Naive thymus-derived CD4-positive, alpha-beta T cell (primary cell): ENCODE measurements at regions of chrX and their contacts with region 1.

Region 1: DNA sequence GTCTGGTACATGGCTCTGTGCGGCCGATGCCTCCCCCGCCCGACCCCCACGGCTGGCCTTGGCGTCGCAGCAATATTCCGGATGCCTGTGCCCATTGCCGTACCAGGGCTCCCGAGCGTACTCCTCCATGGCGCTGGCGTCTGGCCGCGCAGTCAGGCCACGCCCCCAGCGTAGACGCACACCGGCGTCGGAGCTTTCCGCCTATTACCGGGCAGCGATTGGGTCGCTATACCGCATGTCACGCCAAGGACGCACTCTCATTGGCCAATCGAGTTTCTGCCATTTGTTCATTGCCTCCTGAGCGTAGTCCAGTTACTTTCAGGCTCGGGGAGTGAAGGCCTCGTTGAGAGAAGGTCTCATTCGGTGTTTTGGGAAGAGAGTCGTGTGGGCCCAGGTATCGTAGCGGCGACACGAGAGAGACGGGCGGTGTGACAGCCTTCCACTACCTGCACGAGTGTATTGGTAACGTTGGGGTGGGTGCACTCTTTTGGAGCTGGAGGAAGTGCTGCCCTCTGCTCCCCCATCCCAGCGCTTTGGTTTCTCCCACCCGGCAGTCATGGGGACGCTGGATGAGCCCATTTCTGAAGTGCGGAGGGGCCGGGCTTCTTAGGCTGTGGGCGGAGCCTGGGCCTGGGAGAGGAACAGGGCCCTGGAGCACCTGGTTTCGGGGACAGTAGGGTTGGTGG is at the starts of genes PQBP1 and TIMM17B:
- DNase-seq: peak; percentile 71 to 93 (median 89)
- ATAC-seq: peak; percentile 92
- H3K4me3 ChIP-seq: peak within 1 kb of the TSS; percentile 91
- H3K4me3 Mint-ChIP-seq: peak within 1 kb of the TSS; percentile 83 to 100 (median 91)
- H3K27ac ChIP-seq: peak within 1 kb of the TSS; percentile 98
- H3K27ac Mint-ChIP-seq: peak within 1 kb of the TSS; percentile 89 to 98 (median 94)
- H3K4me1 ChIP-seq: peaks cover 12 to 16% of the 10 kb centered on the region in 2 donors
- H3K4me1 Mint-ChIP-seq: peaks cover 6 to 42% (median 24%) of the 10 kb centered on the region in 7 donors
- H3K27me3 ChIP-seq: no peaks in the 10 kb centered on the region
- H3K27me3 Mint-ChIP-seq: no peaks in the 10 kb centered on the region
- total RNA-seq, gene PQBP1: 64.1 to 89.5 (median 74.6) TPM
- total RNA-seq, gene TIMM17B: 41.1 to 46.6 (median 44.2) TPM

Region 2: DNA sequence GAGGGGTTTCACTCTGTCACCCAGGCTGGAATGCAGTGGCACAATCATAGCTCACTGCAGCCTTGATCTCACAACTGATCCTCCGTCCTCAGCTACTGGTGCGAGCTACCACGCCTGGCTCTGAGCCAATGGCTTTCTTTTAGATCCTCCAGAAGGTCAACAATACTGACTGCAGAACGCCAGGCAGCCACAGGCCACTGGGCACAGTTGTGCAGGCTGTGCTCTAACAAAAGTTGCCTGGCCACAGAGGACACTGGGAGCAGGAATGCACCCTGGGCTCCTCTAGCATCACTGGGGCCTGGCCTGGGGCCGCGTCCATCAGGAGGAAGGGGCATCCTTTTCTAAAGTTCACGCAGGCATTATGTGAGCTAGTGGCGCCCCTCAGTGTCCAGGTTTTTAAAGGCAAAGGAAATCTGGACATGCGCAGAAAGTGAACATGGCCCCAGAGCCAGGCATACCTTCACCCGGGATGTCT is 403.8 kb before region 1 on chrX:
- CTCF ChIA-PET with region 1: no interaction called
- POLR2A ChIA-PET with region 1: no interaction called
- intact Hi-C with region 1: no loop called
- DNase-seq: no peak
- ATAC-seq: no peak
- H3K4me3 ChIP-seq: no peak overlapping the region
- H3K4me3 Mint-ChIP-seq: no peak overlapping the region
- H3K27ac ChIP-seq: no peak overlapping the region
- H3K27ac Mint-ChIP-seq: no peak overlapping the region
- H3K4me1 ChIP-seq: no peaks in the 10 kb centered on the region
- H3K4me1 Mint-ChIP-seq: peaks cover 0 to 6% (median 0%) of the 10 kb centered on the region in 7 donors
- H3K27me3 ChIP-seq: no peaks in the 10 kb centered on the region
- H3K27me3 Mint-ChIP-seq: no peaks in the 10 kb centered on the region

Region 3: DNA sequence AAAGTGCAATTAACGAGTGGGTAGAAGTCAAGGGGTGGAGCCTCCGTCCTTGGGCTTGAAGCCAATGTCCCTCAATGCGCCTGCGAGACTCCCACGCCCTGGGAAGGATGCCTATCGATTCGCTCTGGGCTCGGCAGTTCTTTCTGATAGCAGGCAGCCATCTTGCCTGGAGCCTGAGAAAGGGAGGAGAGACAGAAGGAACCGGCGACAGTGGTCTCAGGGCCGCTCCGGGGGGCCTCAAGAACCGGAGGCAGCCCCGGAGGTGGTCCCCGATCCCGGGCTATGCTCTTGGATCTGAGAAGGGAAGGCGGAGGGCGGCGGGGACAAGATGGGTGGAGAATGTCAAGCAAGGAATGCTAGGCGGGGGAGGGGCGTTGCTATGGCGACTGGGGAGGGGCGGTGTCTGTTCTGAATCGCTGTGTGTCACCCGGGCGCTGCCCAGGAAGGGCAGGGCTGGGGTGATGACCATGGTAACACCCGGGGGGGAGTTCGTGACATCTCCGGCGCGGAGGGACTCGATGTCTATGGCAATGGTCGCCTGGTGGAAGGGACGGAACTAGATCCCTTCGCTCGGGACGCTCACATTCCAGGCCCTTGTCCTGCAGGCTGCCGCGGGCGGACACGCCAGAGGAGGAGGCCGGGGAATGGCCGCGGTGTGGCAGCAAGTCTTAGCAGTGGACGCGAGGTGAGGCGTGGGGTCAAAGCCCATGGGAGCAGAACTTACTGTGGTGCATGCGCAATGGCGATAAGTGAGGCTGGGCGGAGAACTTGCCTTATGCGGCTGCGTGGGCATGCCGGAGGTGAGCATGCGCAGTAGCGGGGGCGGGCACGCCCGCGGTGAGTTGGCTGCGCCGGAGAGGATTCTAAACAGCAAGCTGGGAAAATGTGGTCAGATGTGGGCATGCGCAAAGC is 300.2 kb before region 1 on chrX and contains the start of gene WDR13:
- CTCF ChIA-PET with region 1: no interaction called
- POLR2A ChIA-PET with region 1: no interaction called
- intact Hi-C with region 1: loop called in 1 of 2 experiments (anchors 1 kb)
- DNase-seq: peak; percentile 77 to 93 (median 91)
- ATAC-seq: peak; percentile 93
- H3K4me3 ChIP-seq: peak within 1 kb of the TSS; percentile 98
- H3K4me3 Mint-ChIP-seq: peak within 1 kb of the TSS; percentile 81 to 99 (median 96)
- H3K27ac ChIP-seq: peak within 1 kb of the TSS; percentile 94
- H3K27ac Mint-ChIP-seq: peak within 1 kb of the TSS; percentile 98 to 100 (median 99)
- H3K4me1 ChIP-seq: peaks cover 0 to 8% of the 10 kb centered on the region in 2 donors
- H3K4me1 Mint-ChIP-seq: peaks cover 4 to 16% (median 11%) of the 10 kb centered on the region in 7 donors
- H3K27me3 ChIP-seq: no peaks in the 10 kb centered on the region
- H3K27me3 Mint-ChIP-seq: peaks cover 0 to 2% (median 0%) of the 10 kb centered on the region in 5 donors
- total RNA-seq, gene WDR13: 44.8 to 66.9 (median 54.4) TPM

Region 4: GRCh38 chrX:48696301-48697181 is 201.2 kb before region 1 on chrX and contains the start of gene SUV39H1:
- CTCF ChIA-PET with region 1: no interaction called
- POLR2A ChIA-PET with region 1: no interaction called
- intact Hi-C with region 1: loop called in 1 of 2 experiments (anchors 5 kb)
- DNase-seq: peak; percentile 76 to 90 (median 85)
- ATAC-seq: peak; percentile 97
- H3K4me3 ChIP-seq: peak within 1 kb of the TSS; percentile 62
- H3K4me3 Mint-ChIP-seq: peak within 1 kb of the TSS; percentile 86 to 95 (median 90)
- H3K27ac ChIP-seq: peak within 1 kb of the TSS; percentile 82
- H3K27ac Mint-ChIP-seq: peak within 1 kb of the TSS; percentile 91 to 96 (median 95)
- H3K4me1 ChIP-seq: peaks cover 0 to 13% of the 10 kb centered on the region in 2 donors
- H3K4me1 Mint-ChIP-seq: peaks cover 6 to 39% (median 28%) of the 10 kb centered on the region in 7 donors
- H3K27me3 ChIP-seq: no peaks in the 10 kb centered on the region
- H3K27me3 Mint-ChIP-seq: no peaks in the 10 kb centered on the region
- total RNA-seq, gene SUV39H1: 4.6 to 23.3 (median 8.6) TPM

Region 5: DNA sequence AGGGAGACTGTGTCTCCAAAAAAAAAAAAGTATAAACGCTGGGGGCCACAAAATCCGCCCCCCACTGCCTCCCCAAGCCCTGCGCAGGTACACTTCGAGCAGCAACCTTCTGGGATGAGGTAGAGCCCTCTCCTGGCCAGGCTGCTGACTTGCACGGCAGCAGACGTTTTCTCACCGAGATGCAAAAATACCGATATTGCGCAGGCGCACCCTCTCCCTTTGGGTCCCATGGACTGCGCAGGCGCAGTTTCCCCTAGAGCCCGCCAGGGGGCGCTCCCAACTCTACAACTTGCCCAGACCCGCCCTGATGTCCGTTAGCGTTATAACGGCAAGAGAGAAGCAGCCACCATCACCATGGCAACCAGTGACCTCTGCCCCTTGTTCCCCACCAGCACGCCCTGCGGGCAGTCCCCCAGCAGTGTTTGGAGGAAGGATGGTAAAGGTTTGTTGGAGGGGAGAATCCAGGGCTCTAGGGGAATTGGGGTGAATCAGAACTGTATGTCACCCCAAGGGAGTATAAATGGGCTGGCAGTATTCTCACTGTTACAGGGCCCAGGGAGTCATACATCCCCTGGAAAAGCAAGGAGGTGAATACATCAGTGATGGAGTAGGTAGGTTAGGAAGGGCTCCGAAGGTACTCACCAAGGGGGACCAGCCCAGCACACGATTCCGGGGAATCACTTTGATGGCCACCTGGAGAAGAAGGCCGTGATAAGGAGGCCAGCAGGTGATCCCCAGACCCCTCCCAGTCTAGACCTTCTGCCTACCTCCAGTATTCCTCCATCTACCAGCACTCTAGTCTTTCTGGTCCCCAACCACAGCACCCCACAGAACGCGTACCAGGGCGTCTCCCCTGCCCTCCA is 19.6 kb after region 1 on chrX:
- CTCF ChIA-PET with region 1: interaction called, 6 read pairs
- POLR2A ChIA-PET with region 1: interaction called, 29 read pairs
- intact Hi-C with region 1: loop called (anchors 1 kb)
- DNase-seq: peak; percentile 73 to 92 (median 88)
- ATAC-seq: peak; percentile 65
- H3K4me3 ChIP-seq: peak overlapping the region; percentile 75
- H3K4me3 Mint-ChIP-seq: peak overlapping the region; percentile 87 to 99 (median 96)
- H3K27ac ChIP-seq: peak overlapping the region; percentile 95
- H3K27ac Mint-ChIP-seq: peak overlapping the region; percentile 89 to 99 (median 96)
- H3K4me1 ChIP-seq: peaks cover 46 to 49% of the 10 kb centered on the region in 2 donors
- H3K4me1 Mint-ChIP-seq: peaks cover 11 to 82% (median 48%) of the 10 kb centered on the region in 7 donors
- H3K27me3 ChIP-seq: no peaks in the 10 kb centered on the region
- H3K27me3 Mint-ChIP-seq: peaks cover 0 to 5% (median 0%) of the 10 kb centered on the region in 5 donors

Region 6: DNA sequence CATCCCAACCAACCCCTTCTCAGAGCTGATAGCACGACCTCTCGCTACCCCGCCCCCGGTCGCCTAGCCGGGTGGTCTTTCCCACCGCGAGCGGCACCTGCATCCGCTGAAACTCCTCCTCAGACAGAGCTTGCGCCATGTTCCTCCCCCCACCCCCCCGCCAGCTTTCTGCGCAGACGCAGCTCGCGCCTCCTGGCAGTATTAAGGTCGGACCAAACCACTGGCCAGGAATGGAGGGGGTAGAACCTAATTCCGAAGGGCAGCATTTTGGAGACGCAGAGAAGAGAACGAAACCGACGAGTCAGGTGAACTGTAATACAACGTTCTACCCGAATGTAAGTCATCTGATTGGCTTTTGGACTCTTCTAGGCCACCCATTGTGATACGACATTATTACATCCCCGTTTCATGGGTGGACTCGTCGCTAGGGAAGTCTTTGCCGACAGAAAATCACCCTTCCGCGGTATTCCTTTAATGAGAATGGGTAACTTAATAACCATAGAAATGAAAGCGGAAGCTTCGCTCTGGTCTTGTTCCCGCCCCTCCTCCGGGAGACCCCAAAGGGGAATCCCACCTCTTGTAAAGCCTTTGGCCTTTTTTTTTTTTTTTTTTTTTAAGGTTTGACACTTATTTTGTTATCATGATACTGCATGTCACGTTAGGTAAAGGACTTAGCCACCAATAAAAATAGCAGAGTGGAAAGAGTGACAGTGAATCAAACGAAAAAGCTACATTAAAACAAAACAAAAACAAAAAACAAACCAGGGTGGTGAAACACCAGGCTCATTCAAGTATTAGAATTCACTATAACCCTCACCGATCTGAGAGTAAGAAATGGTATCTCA is 104.5 kb after region 1 on chrX and contains the start of gene GRIPAP1:
- CTCF ChIA-PET with region 1: no interaction called
- POLR2A ChIA-PET with region 1: no interaction called
- intact Hi-C with region 1: loop called (anchors 1 to 5 kb)
- DNase-seq: peak; percentile 61 to 87 (median 79)
- ATAC-seq: peak; percentile 88
- H3K4me3 ChIP-seq: peak within 1 kb of the TSS; percentile 97
- H3K4me3 Mint-ChIP-seq: peak within 1 kb of the TSS; percentile 94 to 99 (median 98)
- H3K27ac ChIP-seq: peak within 1 kb of the TSS; percentile 97
- H3K27ac Mint-ChIP-seq: peak within 1 kb of the TSS; percentile 92 to 100 (median 98)
- H3K4me1 ChIP-seq: peaks cover 9 to 10% of the 10 kb centered on the region in 2 donors
- H3K4me1 Mint-ChIP-seq: peaks cover 7 to 43% (median 32%) of the 10 kb centered on the region in 7 donors
- H3K27me3 ChIP-seq: no peaks in the 10 kb centered on the region
- H3K27me3 Mint-ChIP-seq: no peaks in the 10 kb centered on the region
- total RNA-seq, gene GRIPAP1: 103 to 108 (median 105) TPM

Region 7: GRCh38 chrX:49163555-49164419 is 266.0 kb after region 1 on chrX:
- CTCF ChIA-PET with region 1: no interaction called
- POLR2A ChIA-PET with region 1: no interaction called
- intact Hi-C with region 1: loop called (anchors 10 kb)
- DNase-seq: peak; percentile 71 to 84 (median 80)
- ATAC-seq: peak; percentile 74
- H3K4me3 ChIP-seq: peak overlapping the region; percentile 50
- H3K4me3 Mint-ChIP-seq: peak overlapping the region; percentile 72 to 84 (median 81)
- H3K27ac ChIP-seq: peak overlapping the region; percentile 74
- H3K27ac Mint-ChIP-seq: peak overlapping the region; percentile 79 to 97 (median 92)
- H3K4me1 ChIP-seq: peaks cover 14 to 16% of the 10 kb centered on the region in 2 donors
- H3K4me1 Mint-ChIP-seq: peaks cover 13 to 33% (median 26%) of the 10 kb centered on the region in 7 donors
- H3K27me3 ChIP-seq: no peaks in the 10 kb centered on the region
- H3K27me3 Mint-ChIP-seq: peaks cover 0 to under 1% (median 0%) of the 10 kb centered on the region in 5 donors

Region 8: GRCh38 chrX:49310371-49310770 is 412.6 kb after region 1 on chrX:
- CTCF ChIA-PET with region 1: no interaction called
- POLR2A ChIA-PET with region 1: no interaction called
- intact Hi-C with region 1: no loop called
- DNase-seq: no peak
- ATAC-seq: no peak
- H3K4me3 ChIP-seq: peak overlapping the region; percentile 54
- H3K4me3 Mint-ChIP-seq: peak overlapping the region in 4 of 10 donors; percentile 83 to 95 (median 84)
- H3K27ac ChIP-seq: peak overlapping the region; percentile 70
- H3K27ac Mint-ChIP-seq: peak overlapping the region in 7 of 9 donors; percentile 95 to 100 (median 98)
- H3K4me1 ChIP-seq: peaks cover 10 to 15% of the 10 kb centered on the region in 2 donors
- H3K4me1 Mint-ChIP-seq: peaks cover 19 to 29% (median 21%) of the 10 kb centered on the region in 7 donors
- H3K27me3 ChIP-seq: no peaks in the 10 kb centered on the region
- H3K27me3 Mint-ChIP-seq: peaks cover 0 to 21% (median 0%) of the 10 kb centered on the region in 5 donors